ENCODE measurements at regions of chr10 and their contacts with region 1.

Region 1: GRCh38 chr10:124791378-124792348 is at the start of gene EEF1AKMT2:
- DNase-seq: peak; percentile 84
- ATAC-seq: peak; percentile 97
- H3K4me3 Mint-ChIP-seq: peak within 1 kb of the TSS; percentile 93
- H3K27ac Mint-ChIP-seq: peak within 1 kb of the TSS; percentile 97
- H3K4me1 Mint-ChIP-seq: peaks cover 22% of the 10 kb centered on the region
- H3K27me3 Mint-ChIP-seq: peaks cover 4% of the 10 kb centered on the region
- total RNA-seq, gene EEF1AKMT2: 22.3 to 25.5 TPM

Region 2: DNA sequence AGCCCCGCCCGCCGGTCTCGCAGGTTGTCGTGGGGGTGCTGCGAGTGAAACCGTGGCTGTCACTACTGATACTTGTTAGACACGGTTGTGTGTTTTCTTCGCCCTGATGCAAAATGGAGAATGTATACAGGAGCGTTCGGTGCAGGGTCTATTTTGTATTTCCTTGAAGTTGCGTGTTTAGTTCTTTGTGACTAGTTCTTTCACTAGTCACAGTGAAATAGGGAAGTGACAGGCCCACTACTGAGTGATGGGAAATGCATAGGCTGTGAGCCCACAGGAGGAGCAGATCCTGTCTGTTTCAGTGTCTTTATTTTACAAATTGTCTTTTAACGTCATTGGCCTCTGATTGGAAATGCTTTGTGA is 10.6 kb after region 1 on chr10:
- CTCF ChIA-PET with region 1: no interaction called
- POLR2A ChIA-PET with region 1: interaction called, 30 read pairs
- DNase-seq: peak; percentile 31
- ATAC-seq: no peak
- H3K4me3 Mint-ChIP-seq: peak overlapping the region; percentile 95
- H3K27ac Mint-ChIP-seq: peak overlapping the region; percentile 93
- H3K4me1 Mint-ChIP-seq: peaks cover 21% of the 10 kb centered on the region
- H3K27me3 Mint-ChIP-seq: peaks cover 5% of the 10 kb centered on the region